IMR-90 (cell line): ENCODE measurements at regions of chr17 and their contacts with region 1.

Region 1: DNA sequence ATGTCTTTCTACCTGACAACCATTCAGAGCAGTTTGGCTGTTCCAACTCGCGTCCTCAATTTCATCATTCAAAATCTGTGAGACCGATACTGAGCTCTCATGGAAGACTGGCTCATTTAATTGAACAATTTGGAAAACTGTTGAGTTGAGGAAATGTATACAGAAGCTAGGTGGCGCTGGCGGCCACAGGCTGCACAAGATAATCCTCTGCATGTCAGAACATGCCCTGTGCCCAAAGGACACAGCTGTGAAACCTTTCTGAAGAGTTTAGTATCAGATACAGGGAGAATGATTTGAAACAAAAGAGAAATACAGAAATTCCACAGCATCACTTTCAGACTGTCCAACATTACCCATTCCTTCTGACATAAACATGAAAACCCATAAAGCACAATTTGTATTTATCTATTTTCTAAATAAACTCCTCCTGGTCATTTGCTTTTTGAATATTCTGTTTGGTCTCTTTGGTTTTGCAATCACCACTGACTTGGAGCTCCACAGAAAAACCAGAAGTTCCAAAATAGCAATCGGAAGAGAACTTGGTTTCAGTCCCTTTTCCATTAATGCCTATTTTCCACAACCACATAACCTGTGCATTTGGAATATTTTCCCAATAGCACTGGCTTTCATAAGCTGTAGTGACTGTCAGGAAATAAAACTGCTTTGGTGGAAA is 192.8 kb downstream of the MAP2K6 start:
- DNase-seq: peak; percentile 85
- ATAC-seq: peak; percentile 59
- H3K4me3 ChIP-seq: no peak overlapping the region
- H3K27ac ChIP-seq: peak overlapping the region; percentile 97
- H3K4me1 ChIP-seq: peaks cover 18% of the 10 kb centered on the region
- H3K27me3 ChIP-seq: no peaks in the 10 kb centered on the region
- CTCF ChIP-seq: peak; percentile 93
- POLR2A ChIP-seq: 0 out of 2 replicates have a peak, but pooled peaks have one; percentile 2
- RAD21 ChIP-seq: peak; percentile 93

Region 2: GRCh38 chr17:69492410-69493071 is 114.8 kb before region 1 on chr17:
- CTCF ChIA-PET with region 1: no interaction called
- POLR2A ChIA-PET with region 1: no interaction called
- dilution Hi-C with region 1: no loop called
- in situ Hi-C with region 1: no loop called
- intact Hi-C with region 1: no loop called
- DNase-seq: peak; percentile 88
- ATAC-seq: peak; percentile 100
- H3K4me3 ChIP-seq: no peak overlapping the region
- H3K27ac ChIP-seq: no peak overlapping the region
- H3K4me1 ChIP-seq: no peaks in the 10 kb centered on the region
- H3K27me3 ChIP-seq: no peaks in the 10 kb centered on the region
- CTCF ChIP-seq: no peak
- POLR2A ChIP-seq: no peak
- RAD21 ChIP-seq: no peak

Region 3: DNA sequence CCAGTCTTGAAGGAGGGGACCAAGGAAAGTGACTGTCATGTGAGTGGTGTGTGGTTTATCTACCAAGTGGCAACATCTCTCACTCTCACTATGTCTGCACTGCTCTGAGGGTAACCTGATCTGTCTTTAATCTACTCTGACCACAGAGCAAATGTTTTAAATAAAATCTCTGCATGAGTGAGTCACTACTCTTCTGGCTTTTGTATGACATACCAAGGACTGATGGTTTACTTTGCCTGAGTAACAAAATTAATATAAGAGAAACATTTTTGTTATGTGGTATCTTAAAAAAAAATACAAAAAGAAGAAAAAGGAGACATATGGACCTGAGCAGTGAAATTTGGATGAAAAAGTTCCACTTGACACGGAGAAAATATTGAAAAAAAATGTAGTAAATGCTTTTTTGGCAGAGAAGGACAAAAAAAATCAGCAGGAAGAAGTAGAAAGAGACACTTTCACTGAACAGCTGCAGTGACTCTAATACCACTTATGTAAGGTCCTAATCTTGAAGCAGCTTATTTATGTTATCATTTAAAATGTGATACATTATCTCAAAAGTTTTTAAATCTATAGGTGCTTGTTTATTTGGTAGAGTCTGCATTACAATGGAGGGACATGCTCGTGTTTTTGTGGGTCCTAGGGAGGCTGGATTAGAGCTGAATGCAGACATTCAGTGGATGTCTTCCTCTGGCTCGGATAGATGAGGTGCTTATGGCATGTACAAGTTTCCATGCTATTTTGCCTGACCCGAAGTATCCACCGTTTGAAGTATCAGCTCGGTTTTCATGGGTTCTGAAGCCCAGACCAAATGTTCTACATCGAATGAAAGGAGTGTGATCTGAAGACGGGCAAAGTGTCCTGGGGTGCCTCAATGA is 47.9 kb after region 1 on chr17:
- CTCF ChIA-PET with region 1: interaction called, 5 read pairs
- POLR2A ChIA-PET with region 1: interaction called, 3 read pairs
- dilution Hi-C with region 1: no loop called
- in situ Hi-C with region 1: no loop called
- intact Hi-C with region 1: loop called (anchors 2 kb)
- DNase-seq: peak; percentile 95
- ATAC-seq: peak; percentile 94
- H3K4me3 ChIP-seq: no peak overlapping the region
- H3K27ac ChIP-seq: peak overlapping the region; percentile 96
- H3K4me1 ChIP-seq: peaks cover 8% of the 10 kb centered on the region
- H3K27me3 ChIP-seq: peaks cover 19% of the 10 kb centered on the region
- CTCF ChIP-seq: no peak
- POLR2A ChIP-seq: no peak
- RAD21 ChIP-seq: no peak

Region 4: GRCh38 chr17:69761751-69762321 is 154.5 kb after region 1 on chr17:
- CTCF ChIA-PET with region 1: interaction called, 9 read pairs
- POLR2A ChIA-PET with region 1: interaction called, 5 read pairs
- dilution Hi-C with region 1: no loop called
- in situ Hi-C with region 1: no loop called
- intact Hi-C with region 1: loop called (anchors 2 kb)
- DNase-seq: peak; percentile 99
- ATAC-seq: peak; percentile 80
- H3K4me3 ChIP-seq: no peak overlapping the region
- H3K27ac ChIP-seq: peak overlapping the region; percentile 99
- H3K4me1 ChIP-seq: peaks cover 20% of the 10 kb centered on the region
- H3K27me3 ChIP-seq: no peaks in the 10 kb centered on the region
- CTCF ChIP-seq: 0 out of 2 replicates have a peak, but pooled peaks have one; percentile 4
- POLR2A ChIP-seq: no peak; the same call in 1 of the 2 replicates
- RAD21 ChIP-seq: no peak

Region 5: DNA sequence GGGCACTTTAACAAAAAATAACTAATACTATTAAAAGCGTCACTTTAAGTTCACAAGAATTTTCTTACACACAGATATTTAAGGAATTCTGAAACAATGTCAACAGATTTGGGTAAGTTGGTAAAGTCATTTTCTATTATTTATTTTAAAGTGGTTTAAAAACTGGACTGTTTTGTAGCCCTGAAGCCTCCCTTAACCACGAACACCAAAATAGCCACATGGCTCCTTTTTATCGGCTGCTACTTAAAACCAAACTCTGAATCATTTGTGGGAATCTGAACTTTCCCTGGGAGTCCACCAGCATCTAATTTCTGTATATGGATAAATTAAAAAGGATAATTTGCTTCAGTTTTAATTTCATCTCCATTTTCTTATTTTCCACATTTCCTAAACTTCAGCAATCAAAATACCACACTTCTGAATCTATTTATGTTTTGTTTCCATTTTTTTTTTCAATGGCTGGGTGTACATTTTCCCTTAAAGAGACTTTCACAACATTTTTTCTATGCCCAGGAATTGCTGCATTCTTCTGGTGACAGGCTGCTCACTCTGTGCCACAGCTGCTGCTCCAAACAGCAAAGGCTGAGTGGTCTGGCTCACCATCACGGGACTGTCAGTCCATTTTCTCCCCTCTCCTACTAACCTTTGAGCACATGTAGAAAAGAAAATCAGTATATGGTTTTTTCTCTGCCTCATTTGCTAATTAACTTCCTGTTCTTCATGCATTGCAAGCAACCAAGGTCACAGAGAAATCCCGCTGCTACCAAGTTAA is 212.2 kb after region 1 on chr17:
- CTCF ChIA-PET with region 1: no interaction called
- POLR2A ChIA-PET with region 1: no interaction called
- dilution Hi-C with region 1: no loop called
- in situ Hi-C with region 1: no loop called
- intact Hi-C with region 1: loop called (anchors 2 kb)
- DNase-seq: peak; percentile 67
- ATAC-seq: peak; percentile 78
- H3K4me3 ChIP-seq: no peak overlapping the region
- H3K27ac ChIP-seq: peak overlapping the region; percentile 38; the same call in 1 of the 2 replicates
- H3K4me1 ChIP-seq: peaks cover 9% of the 10 kb centered on the region
- H3K27me3 ChIP-seq: peaks cover 2% of the 10 kb centered on the region
- CTCF ChIP-seq: no peak
- POLR2A ChIP-seq: no peak
- RAD21 ChIP-seq: no peak

Region 6: DNA sequence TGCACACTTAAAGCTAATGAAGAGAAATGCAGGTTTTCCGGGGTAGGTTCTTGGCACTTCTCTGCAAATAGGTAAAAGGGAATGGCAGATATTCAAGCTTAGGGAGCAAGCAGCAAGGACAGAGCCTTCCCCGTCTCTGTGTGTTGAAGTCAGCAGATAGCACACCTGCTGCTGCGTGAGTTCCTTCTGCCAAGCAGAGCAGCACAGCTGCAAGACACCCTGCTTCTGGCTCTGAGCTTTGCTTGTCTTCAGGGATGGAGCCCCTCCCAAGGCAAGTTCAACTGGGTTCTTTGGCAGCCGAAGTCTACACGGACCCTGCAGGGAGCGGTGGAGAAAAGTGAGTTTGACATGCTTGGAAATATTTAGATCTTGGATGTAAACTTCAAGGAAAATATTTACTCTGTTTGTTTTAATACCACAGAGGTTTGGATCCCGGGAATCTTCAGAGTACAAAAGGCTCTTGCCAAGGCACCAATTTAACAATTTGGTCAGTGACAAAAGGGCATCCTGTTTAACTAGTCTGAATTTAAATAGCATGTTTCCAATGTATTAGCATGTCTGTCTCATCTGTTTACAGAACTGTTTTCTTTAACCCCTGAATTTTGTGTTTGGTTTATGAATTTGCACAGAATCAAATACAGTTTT is 354.3 kb after region 1 on chr17:
- CTCF ChIA-PET with region 1: interaction called, 5 read pairs
- POLR2A ChIA-PET with region 1: interaction called, 4 read pairs
- dilution Hi-C with region 1: no loop called
- in situ Hi-C with region 1: no loop called
- intact Hi-C with region 1: loop called (anchors 5 kb)
- DNase-seq: peak; percentile 47
- ATAC-seq: peak; percentile 88
- H3K4me3 ChIP-seq: no peak overlapping the region
- H3K27ac ChIP-seq: peak overlapping the region; percentile 36; the same call in 1 of the 2 replicates
- H3K4me1 ChIP-seq: peaks cover 8% of the 10 kb centered on the region; the same call in 1 of the 2 replicates
- H3K27me3 ChIP-seq: peaks cover 4% of the 10 kb centered on the region; the same call in 1 of the 2 replicates
- CTCF ChIP-seq: no peak
- POLR2A ChIP-seq: no peak
- RAD21 ChIP-seq: no peak

Region 7: GRCh38 chr17:70144260-70144846 is 537.1 kb after region 1 on chr17:
- CTCF ChIA-PET with region 1: interaction called, 6 read pairs
- POLR2A ChIA-PET with region 1: no interaction called
- dilution Hi-C with region 1: no loop called
- in situ Hi-C with region 1: no loop called
- intact Hi-C with region 1: loop called (anchors 2 kb)
- DNase-seq: peak; percentile 54
- ATAC-seq: peak; percentile 51
- H3K4me3 ChIP-seq: no peak overlapping the region
- H3K27ac ChIP-seq: no peak overlapping the region
- H3K4me1 ChIP-seq: no peaks in the 10 kb centered on the region
- H3K27me3 ChIP-seq: no peaks in the 10 kb centered on the region
- CTCF ChIP-seq: peak; percentile 70
- POLR2A ChIP-seq: no peak
- RAD21 ChIP-seq: peak; percentile 74

Region 8: GRCh38 chr17:70552230-70552981 is 945.1 kb after region 1 on chr17:
- CTCF ChIA-PET with region 1: interaction called, 8 read pairs
- POLR2A ChIA-PET with region 1: no interaction called
- dilution Hi-C with region 1: no loop called
- in situ Hi-C with region 1: no loop called
- intact Hi-C with region 1: loop called (anchors 10 kb)
- DNase-seq: peak; percentile 49
- ATAC-seq: peak; percentile 76
- H3K4me3 ChIP-seq: no peak overlapping the region
- H3K27ac ChIP-seq: no peak overlapping the region
- H3K4me1 ChIP-seq: no peaks in the 10 kb centered on the region; the same call in 1 of the 2 replicates
- H3K27me3 ChIP-seq: no peaks in the 10 kb centered on the region
- CTCF ChIP-seq: peak; percentile 59
- POLR2A ChIP-seq: no peak
- RAD21 ChIP-seq: peak; percentile 60